CD8-positive, alpha-beta T cell (primary cell): ENCODE measurements at regions of chr18 and their contacts with region 1.

Region 1: DNA sequence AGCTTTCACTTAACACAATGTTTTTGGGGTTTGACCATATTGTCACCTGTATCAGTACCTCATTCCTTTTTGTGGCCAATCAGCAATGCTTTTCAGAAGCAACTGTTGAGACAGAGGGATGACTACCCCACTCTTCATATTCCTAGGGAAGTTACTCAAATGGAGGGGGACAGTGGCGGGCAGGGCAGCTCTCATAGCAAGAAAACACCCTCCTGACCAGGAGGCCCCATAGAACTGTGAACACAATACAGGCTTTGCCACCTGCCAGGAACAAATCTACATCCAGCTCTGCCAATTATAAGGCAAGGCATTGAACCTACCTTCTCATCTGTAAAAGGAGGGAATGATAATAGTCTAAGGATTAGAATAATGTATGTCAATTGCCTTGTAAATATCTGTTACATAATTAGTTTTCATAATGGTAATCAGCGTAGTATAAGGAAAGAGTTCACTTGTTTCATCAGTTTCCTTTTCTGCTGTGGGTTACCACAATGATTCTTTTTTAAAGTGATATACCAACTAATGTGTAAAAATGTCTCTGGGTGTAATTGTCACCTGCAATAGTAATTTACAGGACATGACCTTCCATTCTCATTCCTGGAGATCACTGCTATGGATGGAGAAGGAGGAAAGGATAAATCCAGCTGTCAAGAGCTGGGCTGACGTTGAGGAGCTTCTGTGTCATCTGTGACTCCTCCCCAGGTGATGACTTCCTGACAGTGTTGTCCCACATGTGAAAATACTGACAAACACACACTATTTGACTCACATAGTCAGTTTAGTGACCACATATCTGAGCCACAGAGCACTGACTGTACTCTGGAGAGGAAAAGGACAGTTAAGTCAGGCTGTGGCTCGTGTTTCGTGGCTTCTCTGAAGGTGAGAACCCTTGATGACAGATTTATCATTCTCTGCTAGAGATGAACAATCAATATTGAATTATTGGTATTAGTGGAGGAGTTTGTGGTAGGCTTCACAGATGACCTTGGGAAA is 13.5 kb downstream of the ALPK2 start:
- DNase-seq: peak; percentile 8 to 84 (median 56)
- ATAC-seq: peak; percentile 95
- H3K4me3 ChIP-seq: peak overlapping the region; percentile 1 to 16
- H3K4me3 Mint-ChIP-seq: peak overlapping the region; percentile 75
- H3K27ac ChIP-seq: peak overlapping the region; percentile 55 to 89
- H3K27ac Mint-ChIP-seq: peak overlapping the region; percentile 95
- H3K4me1 ChIP-seq: peaks cover 40% of the 10 kb centered on the region
- H3K4me1 Mint-ChIP-seq: peaks cover 41% of the 10 kb centered on the region
- H3K27me3 ChIP-seq: no peaks in the 10 kb centered on the region
- H3K27me3 Mint-ChIP-seq: no peaks in the 10 kb centered on the region
- CTCF ChIP-seq: no peak

Region 2: DNA sequence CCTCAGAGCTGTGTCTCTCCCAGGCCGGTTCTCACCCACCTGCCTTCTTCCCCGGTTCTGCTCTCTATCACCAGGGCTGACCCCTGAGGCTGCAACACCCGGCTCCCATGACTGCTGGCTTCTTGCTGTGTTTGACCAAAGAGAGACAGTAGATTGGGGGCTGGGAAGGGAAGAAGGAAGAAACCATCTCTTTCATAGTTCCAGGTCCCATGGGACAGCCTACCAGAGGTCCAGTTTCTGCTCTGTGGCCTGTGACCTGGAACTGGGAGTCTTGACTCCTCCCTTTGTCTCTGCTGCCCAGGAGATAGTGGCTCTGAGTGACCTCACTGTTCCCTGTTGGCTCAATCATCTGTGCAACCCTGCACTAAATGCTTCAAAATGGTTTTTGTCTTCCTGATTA is 24.6 kb before region 1 on chr18:
- CTCF ChIA-PET with region 1: no interaction called
- POLR2A ChIA-PET with region 1: no interaction called
- intact Hi-C with region 1: no loop called
- DNase-seq: no peak
- ATAC-seq: no peak
- H3K4me3 ChIP-seq: no peak overlapping the region
- H3K4me3 Mint-ChIP-seq: no peak overlapping the region
- H3K27ac ChIP-seq: no peak overlapping the region
- H3K27ac Mint-ChIP-seq: no peak overlapping the region
- H3K4me1 ChIP-seq: no peaks in the 10 kb centered on the region
- H3K4me1 Mint-ChIP-seq: no peaks in the 10 kb centered on the region
- H3K27me3 ChIP-seq: no peaks in the 10 kb centered on the region
- H3K27me3 Mint-ChIP-seq: no peaks in the 10 kb centered on the region
- CTCF ChIP-seq: no peak

Region 3: DNA sequence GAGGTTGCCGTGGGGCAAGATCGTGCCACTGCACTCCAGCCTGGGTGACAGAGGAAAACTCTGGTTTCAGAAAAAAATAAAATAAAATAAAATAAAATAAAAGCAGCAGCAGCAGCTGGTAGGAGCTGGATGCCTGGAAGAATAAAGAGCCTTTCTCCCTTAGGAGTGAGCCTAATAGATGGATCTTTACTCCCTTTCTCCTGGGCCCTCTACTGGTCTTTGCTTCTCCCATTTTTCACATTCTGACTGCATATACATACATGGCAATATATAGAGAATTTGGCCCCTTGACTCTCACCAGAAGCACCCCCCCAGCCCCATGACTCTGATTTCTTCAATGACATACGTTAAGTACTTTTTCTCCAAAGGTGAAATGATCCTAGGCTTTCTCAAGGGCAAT is 46.0 kb after region 1 on chr18:
- CTCF ChIA-PET with region 1: interaction called, 3 read pairs
- POLR2A ChIA-PET with region 1: interaction called, 3 read pairs
- intact Hi-C with region 1: loop called (anchors 1 to 5 kb)
- DNase-seq: no peak
- ATAC-seq: no peak
- H3K4me3 ChIP-seq: no peak overlapping the region
- H3K4me3 Mint-ChIP-seq: no peak overlapping the region
- H3K27ac ChIP-seq: no peak overlapping the region
- H3K27ac Mint-ChIP-seq: no peak overlapping the region
- H3K4me1 ChIP-seq: peaks cover 28% of the 10 kb centered on the region
- H3K4me1 Mint-ChIP-seq: peaks cover 47% of the 10 kb centered on the region
- H3K27me3 ChIP-seq: no peaks in the 10 kb centered on the region
- H3K27me3 Mint-ChIP-seq: no peaks in the 10 kb centered on the region
- CTCF ChIP-seq: no peak

Region 4: DNA sequence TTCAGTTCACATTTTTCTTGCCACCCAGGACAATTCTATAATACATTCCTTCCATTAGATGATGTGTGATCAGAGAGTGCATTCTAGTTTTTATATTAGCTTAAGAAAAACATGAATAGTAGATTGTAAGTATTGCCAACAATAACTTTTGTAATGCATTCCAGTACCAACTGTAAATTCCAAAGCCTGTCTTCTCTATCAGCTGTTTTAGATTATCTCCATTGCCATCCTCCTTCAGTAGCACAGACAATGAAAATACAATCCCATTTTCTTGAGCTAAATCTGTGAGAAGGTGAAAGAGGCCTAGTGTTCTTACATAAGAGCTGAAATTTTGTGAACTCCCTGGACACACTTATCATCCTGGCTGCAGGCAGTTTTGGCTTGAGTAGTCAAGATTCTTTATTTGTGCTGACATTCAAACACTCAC is 977.9 kb after region 1 on chr18:
- CTCF ChIA-PET with region 1: no interaction called
- POLR2A ChIA-PET with region 1: no interaction called
- intact Hi-C with region 1: no loop called
- DNase-seq: no peak
- ATAC-seq: no peak
- H3K4me3 ChIP-seq: no peak overlapping the region
- H3K4me3 Mint-ChIP-seq: no peak overlapping the region
- H3K27ac ChIP-seq: no peak overlapping the region
- H3K27ac Mint-ChIP-seq: no peak overlapping the region
- H3K4me1 ChIP-seq: no peaks in the 10 kb centered on the region
- H3K4me1 Mint-ChIP-seq: no peaks in the 10 kb centered on the region
- H3K27me3 ChIP-seq: no peaks in the 10 kb centered on the region
- H3K27me3 Mint-ChIP-seq: peaks cover 3% of the 10 kb centered on the region
- CTCF ChIP-seq: no peak